ENCODE measurements at regions of chr2 and their contacts with region 1.

Region 1: DNA sequence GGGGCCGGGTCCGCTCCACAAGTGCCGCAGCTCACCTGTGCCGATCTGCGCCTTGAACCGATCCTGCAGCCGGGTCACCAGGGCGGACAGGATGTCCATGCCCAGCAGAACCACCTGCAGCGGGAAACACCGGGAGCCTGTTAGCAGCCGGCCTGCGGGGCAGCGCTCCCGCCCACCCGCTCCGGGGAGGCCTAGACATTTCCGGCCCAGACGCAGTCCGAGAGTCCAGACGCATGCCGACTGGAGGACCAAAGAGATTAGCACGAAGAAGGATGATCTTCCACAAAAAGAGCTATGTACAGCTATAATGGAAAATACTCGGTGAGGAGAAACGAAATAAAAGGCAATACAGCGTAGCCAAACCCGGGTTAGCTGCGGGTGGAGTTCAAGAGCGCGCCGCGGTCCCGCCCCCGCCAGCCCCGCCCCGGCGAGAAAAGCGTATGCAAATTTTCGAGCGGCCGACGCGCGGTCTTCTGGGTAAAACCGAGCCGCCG is 421 bp upstream of the RNU4ATAC start:
- H3K4me3 Mint-ChIP-seq: peak overlapping the region; percentile 83
- H3K27ac Mint-ChIP-seq: peak overlapping the region; percentile 86
- H3K4me1 Mint-ChIP-seq: peaks cover 39% of the 10 kb centered on the region
- H3K27me3 Mint-ChIP-seq: no peaks in the 10 kb centered on the region

Region 2: DNA sequence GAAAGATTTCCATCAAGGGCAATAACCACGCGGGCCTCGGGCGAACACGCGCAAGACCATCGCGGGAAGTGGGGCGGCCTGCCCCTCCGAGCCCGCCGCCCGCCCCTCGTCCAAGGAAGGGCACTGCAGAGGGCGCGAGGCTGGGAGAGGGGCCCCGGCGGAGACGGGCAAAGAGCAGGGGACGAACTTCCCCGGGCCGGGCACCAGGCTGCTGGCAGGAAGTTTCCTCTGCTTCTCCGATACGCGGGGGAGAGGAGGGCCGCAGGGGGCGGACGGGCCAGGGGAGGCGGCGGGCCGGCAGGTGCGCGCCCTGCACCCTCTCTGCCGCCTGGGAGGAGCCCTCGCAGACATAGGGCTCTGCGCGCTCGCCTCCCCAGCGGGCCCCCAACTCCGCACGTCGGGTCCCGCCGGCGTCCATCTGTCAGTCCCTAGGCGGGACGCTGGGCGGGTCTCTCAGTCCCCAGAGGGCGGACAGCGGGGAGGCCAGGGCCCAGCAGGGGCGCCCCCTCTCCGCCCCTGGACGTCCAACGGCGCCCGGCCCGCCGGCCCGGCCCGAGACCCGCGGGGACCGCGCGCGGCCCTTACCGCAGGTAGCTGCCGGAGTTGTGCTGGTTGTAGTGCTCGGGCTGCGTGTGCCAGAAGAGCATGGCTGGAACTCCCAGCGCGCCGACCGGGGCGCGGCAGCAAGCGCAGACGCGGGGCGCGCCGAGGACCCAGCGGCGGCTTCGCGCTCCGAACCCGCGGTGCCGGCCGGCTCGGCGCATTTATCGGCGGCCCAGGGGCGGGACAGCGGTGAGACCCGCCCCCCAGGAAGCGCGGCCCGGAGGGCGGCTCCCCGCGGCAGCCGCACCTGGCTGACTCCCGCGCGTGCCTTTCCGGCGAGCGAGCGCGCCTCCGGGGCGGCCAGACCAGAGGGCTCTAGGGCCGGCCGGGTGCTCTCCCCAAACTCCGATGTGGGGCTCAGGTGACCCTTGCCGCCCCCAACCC is 245.5 kb before region 1 on chr2 and contains the start of gene TFCP2L1:
- intact Hi-C with region 1: loop called (anchors 5 kb)
- H3K4me3 Mint-ChIP-seq: peak within 1 kb of the TSS; percentile 63
- H3K27ac Mint-ChIP-seq: peak within 1 kb of the TSS; percentile 28
- H3K4me1 Mint-ChIP-seq: peaks cover 76% of the 10 kb centered on the region
- H3K27me3 Mint-ChIP-seq: peaks cover 50% of the 10 kb centered on the region

Region 3: GRCh38 chr2:121596221-121597080 is 66.2 kb after region 1 on chr2:
- intact Hi-C with region 1: loop called (anchors 5 kb)
- H3K4me3 Mint-ChIP-seq: peak overlapping the region; percentile 69
- H3K27ac Mint-ChIP-seq: peak overlapping the region; percentile 83
- H3K4me1 Mint-ChIP-seq: peaks cover 32% of the 10 kb centered on the region
- H3K27me3 Mint-ChIP-seq: no peaks in the 10 kb centered on the region

Region 4: GRCh38 chr2:121649596-121650314 is 119.5 kb after region 1 on chr2:
- intact Hi-C with region 1: loop called (anchors 2 kb)
- H3K4me3 Mint-ChIP-seq: peak overlapping the region; percentile 89
- H3K27ac Mint-ChIP-seq: peak overlapping the region; percentile 99
- H3K4me1 Mint-ChIP-seq: peaks cover 66% of the 10 kb centered on the region
- H3K27me3 Mint-ChIP-seq: no peaks in the 10 kb centered on the region

Region 5: GRCh38 chr2:121722479-121722878 is 192.2 kb after region 1 on chr2:
- intact Hi-C with region 1: loop called (anchors 1 kb)
- H3K4me3 Mint-ChIP-seq: no peak overlapping the region
- H3K27ac Mint-ChIP-seq: no peak overlapping the region
- H3K4me1 Mint-ChIP-seq: peaks cover 25% of the 10 kb centered on the region
- H3K27me3 Mint-ChIP-seq: no peaks in the 10 kb centered on the region

Region 6: DNA sequence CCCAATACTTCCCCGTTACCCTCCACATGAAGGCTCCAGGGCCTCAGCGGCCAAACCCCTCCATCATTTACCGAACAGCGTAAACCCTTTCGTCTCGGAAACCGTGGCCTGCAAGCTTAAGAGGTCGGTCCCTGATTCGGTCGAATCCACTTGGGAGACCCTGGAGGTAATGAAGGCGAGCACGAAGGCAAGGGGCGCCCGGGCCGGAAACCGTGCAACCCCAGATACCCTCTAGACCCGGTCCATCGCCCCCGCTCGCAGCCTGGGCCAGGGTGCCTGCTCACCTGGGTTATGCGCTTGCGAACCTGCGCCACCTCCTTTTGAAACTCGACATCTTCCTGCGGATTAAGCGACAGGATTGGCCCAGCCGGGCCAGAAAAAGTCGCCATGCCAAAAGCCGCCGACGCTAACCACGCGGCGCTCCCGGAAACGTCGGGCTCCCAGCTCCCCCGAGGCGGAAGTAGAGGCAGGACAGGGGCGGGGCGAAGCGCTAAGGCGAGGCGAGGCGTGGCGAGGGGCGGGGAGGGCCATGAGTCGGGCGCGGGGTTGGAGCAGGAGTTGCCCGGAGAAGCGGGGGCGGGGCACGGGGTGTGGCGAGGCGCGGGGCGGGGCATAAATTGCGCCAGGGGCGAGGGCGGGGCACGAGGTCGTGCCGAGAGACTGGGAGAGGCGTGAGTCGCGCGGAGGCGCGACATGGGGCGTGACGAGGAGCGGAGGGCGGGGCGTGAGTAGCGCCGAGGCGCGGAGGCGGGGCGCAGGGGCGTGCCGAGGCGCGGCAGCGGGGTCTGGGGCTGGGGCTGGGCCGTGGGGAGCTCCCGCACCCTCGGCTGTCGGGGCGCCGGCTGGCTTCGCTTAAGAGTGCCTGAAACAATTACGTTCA is 206.4 kb after region 1 on chr2 and contains the start of gene NIFK:
- intact Hi-C with region 1: loop called (anchors 1 kb)
- H3K4me3 Mint-ChIP-seq: peak within 1 kb of the TSS; percentile 98
- H3K27ac Mint-ChIP-seq: peak within 1 kb of the TSS; percentile 94
- H3K4me1 Mint-ChIP-seq: peaks cover 37% of the 10 kb centered on the region
- H3K27me3 Mint-ChIP-seq: no peaks in the 10 kb centered on the region

Region 7: GRCh38 chr2:121755236-121756111 is 225.2 kb after region 1 on chr2 and contains the start of gene TSN:
- intact Hi-C with region 1: loop called (anchors 1 kb)
- H3K4me3 Mint-ChIP-seq: peak within 1 kb of the TSS; percentile 96
- H3K27ac Mint-ChIP-seq: peak within 1 kb of the TSS; percentile 95
- H3K4me1 Mint-ChIP-seq: peaks cover 33% of the 10 kb centered on the region
- H3K27me3 Mint-ChIP-seq: no peaks in the 10 kb centered on the region

Region 8: GRCh38 chr2:122205637-122206036 is 675.4 kb after region 1 on chr2:
- intact Hi-C with region 1: no loop called
- H3K4me3 Mint-ChIP-seq: no peak overlapping the region
- H3K27ac Mint-ChIP-seq: no peak overlapping the region
- H3K4me1 Mint-ChIP-seq: no peaks in the 10 kb centered on the region
- H3K27me3 Mint-ChIP-seq: no peaks in the 10 kb centered on the region

Measured in dendritic cell treated with granulocyte-macrophage colony-stimulating factor and Interleukin-4, amounts not matched to agents 40 ng/mL and 50 ng/mL, for 4 days (primary cell).